ENCODE measurements at regions of chr3 and their contacts with region 1.

Region 1: DNA sequence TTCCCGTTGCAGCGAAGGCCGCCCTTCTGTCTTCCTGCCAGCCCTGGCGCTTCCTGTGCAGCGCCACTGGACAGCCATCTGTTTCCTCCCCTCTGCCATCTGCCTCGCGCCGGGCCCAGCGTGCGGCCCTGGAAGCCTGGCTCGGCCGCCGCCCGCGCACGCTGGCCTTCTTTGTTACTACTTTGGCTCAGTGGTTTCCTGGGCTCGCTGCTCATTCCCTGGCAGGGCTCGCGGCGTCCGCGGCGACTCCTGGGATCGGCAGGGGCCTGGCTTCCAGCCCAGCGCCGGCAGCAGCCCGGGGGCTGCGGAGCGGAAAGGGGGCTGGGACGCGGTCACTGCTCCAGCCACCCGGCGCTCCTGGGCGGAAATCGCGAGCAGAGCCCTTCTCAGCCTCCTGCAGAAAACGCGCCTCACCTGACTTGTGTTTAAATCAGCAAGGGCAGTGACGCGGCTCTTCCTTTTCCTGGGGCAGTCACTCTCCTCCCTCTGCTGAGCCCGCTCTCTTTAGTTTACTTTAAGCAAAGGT is 10.0 kb downstream of the CMTM7 start:
- DNase-seq: peak; percentile 80
- ATAC-seq: peak; percentile 70
- H3K4me3 ChIP-seq: peak overlapping the region; percentile 33 to 75 (median 55)
- H3K4me3 Mint-ChIP-seq: peak overlapping the region; percentile 88
- H3K27ac ChIP-seq: peak overlapping the region; percentile 88 to 94
- H3K27ac Mint-ChIP-seq: peak overlapping the region; percentile 96
- H3K4me1 ChIP-seq: peaks cover 41 to 58% of the 10 kb centered on the region in 2 donors
- H3K4me1 Mint-ChIP-seq: peaks cover 76% of the 10 kb centered on the region
- H3K27me3 ChIP-seq: no peaks in the 10 kb centered on the region
- H3K27me3 Mint-ChIP-seq: no peaks in the 10 kb centered on the region
- CTCF ChIP-seq: no peak

Region 2: GRCh38 chr3:31936420-31937060 is 465.1 kb before region 1 on chr3:
- CTCF ChIA-PET with region 1: no interaction called
- POLR2A ChIA-PET with region 1: no interaction called
- intact Hi-C with region 1: no loop called
- DNase-seq: no peak
- ATAC-seq: peak; percentile 44
- H3K4me3 ChIP-seq: no peak overlapping the region
- H3K4me3 Mint-ChIP-seq: no peak overlapping the region
- H3K27ac ChIP-seq: peak overlapping the region in 1 of 2 donors; percentile 14
- H3K27ac Mint-ChIP-seq: no peak overlapping the region
- H3K4me1 ChIP-seq: peaks cover 74 to 85% of the 10 kb centered on the region in 2 donors
- H3K4me1 Mint-ChIP-seq: peaks cover 41% of the 10 kb centered on the region
- H3K27me3 ChIP-seq: no peaks in the 10 kb centered on the region
- H3K27me3 Mint-ChIP-seq: no peaks in the 10 kb centered on the region
- CTCF ChIP-seq: no peak

Region 3: DNA sequence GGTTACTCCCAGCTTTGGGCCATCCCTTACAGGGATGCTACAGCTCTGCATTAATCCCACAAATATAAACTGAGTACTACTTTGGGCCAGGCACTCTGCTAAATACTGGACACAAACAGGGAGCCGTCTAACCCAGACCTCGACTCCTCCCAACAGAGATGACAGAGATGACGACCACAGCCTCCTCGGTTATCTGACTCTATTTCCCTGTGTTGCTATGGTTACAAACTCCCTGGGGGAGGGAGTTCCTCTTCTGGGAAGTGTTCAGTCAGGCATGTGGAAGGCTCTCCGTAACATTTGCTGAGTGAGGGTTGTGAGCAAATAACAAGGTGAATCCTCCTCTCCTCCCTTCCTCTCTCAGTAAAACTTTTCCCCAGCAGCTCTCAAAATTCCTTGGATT is 16.7 kb before region 1 on chr3:
- CTCF ChIA-PET with region 1: interaction called, 12 read pairs
- POLR2A ChIA-PET with region 1: interaction called, 4 read pairs
- intact Hi-C with region 1: no loop called
- DNase-seq: peak; percentile 76
- ATAC-seq: peak; percentile 21
- H3K4me3 ChIP-seq: no peak overlapping the region
- H3K4me3 Mint-ChIP-seq: no peak overlapping the region
- H3K27ac ChIP-seq: no peak overlapping the region
- H3K27ac Mint-ChIP-seq: no peak overlapping the region
- H3K4me1 ChIP-seq: peaks cover 13 to 21% of the 10 kb centered on the region in 2 donors
- H3K4me1 Mint-ChIP-seq: peaks cover 21% of the 10 kb centered on the region
- H3K27me3 ChIP-seq: no peaks in the 10 kb centered on the region
- H3K27me3 Mint-ChIP-seq: peaks cover 5% of the 10 kb centered on the region
- CTCF ChIP-seq: no peak

Region 4: GRCh38 chr3:32420126-32421038 is 18.8 kb after region 1 on chr3:
- CTCF ChIA-PET with region 1: interaction called, 11 read pairs
- POLR2A ChIA-PET with region 1: interaction called, 3 read pairs
- intact Hi-C with region 1: loop called (anchors 2 kb)
- DNase-seq: peak; percentile 80
- ATAC-seq: peak; percentile 77
- H3K4me3 ChIP-seq: peak overlapping the region in 3 of 5 experiments; percentile 2 to 38 (median 11)
- H3K4me3 Mint-ChIP-seq: peak overlapping the region; percentile 84
- H3K27ac ChIP-seq: peak overlapping the region; percentile 79 to 86
- H3K27ac Mint-ChIP-seq: peak overlapping the region; percentile 97
- H3K4me1 ChIP-seq: peaks cover 67 to 73% of the 10 kb centered on the region in 2 donors
- H3K4me1 Mint-ChIP-seq: peaks cover 84% of the 10 kb centered on the region
- H3K27me3 ChIP-seq: no peaks in the 10 kb centered on the region
- H3K27me3 Mint-ChIP-seq: no peaks in the 10 kb centered on the region
- CTCF ChIP-seq: no peak

Region 5: GRCh38 chr3:32570421-32571191 is 169.0 kb after region 1 on chr3 and contains the start of gene DYNC1LI1:
- CTCF ChIA-PET with region 1: no interaction called
- POLR2A ChIA-PET with region 1: no interaction called
- intact Hi-C with region 1: loop called (anchors 5 kb)
- DNase-seq: peak; percentile 95
- ATAC-seq: peak; percentile 96
- H3K4me3 ChIP-seq: peak within 1 kb of the TSS; percentile 55 to 96 (median 92)
- H3K4me3 Mint-ChIP-seq: peak within 1 kb of the TSS; percentile 94
- H3K27ac ChIP-seq: peak within 1 kb of the TSS; percentile 84 to 93
- H3K27ac Mint-ChIP-seq: peak within 1 kb of the TSS; percentile 94
- H3K4me1 ChIP-seq: peaks cover 22 to 24% of the 10 kb centered on the region in 2 donors
- H3K4me1 Mint-ChIP-seq: peaks cover 29% of the 10 kb centered on the region
- H3K27me3 ChIP-seq: no peaks in the 10 kb centered on the region
- H3K27me3 Mint-ChIP-seq: no peaks in the 10 kb centered on the region
- CTCF ChIP-seq: no peak
- total RNA-seq, gene DYNC1LI1: 38.8 and 47.8 TPM in 2 replicates

Region 6: DNA sequence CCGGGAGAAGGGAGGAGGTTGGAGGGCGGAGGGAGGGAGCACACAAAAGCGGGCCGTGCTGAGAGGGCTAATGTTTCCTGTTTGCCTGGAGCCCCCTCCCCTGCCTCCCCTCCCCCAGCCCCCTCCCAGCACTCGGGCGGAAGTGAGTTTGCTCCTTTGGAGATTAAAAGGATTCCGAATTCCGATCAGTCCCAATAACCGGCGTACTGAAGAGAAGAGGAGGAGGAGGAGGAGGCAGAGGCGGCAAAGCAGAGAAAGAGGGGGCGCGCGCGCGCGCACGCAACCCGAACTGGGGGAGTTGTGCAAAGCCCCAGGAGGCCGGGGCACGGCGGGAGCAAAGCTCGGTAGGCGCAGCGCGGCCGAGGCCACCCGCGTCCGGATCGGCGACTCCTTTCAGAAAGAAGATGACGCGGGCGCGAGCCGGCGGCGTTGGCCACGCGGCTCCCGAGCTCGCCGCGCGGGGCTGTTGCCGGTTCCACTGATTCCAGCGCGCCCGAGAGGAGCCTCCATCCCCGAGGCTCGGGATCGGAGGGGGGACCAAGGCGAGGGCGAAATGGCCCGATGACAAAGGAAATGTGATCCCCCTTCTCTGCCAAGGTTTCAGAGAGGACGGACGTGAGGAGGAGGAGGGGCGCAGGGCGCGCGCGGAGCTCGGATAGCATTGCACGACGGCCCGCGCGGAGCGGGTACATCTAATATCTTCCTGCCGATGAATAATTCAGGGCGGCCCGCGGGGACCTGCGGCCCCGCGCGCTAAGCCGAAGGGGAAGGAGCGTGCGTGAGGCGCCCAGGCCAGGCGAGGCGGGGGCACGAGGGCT is 415.0 kb after region 1 on chr3:
- CTCF ChIA-PET with region 1: no interaction called
- POLR2A ChIA-PET with region 1: no interaction called
- intact Hi-C with region 1: no loop called
- DNase-seq: peak; percentile 48
- ATAC-seq: no peak
- H3K4me3 ChIP-seq: peak overlapping the region in 4 of 5 experiments; percentile 25 to 46 (median 44)
- H3K4me3 Mint-ChIP-seq: peak overlapping the region; percentile 77
- H3K27ac ChIP-seq: no peak overlapping the region
- H3K27ac Mint-ChIP-seq: no peak overlapping the region
- H3K4me1 ChIP-seq: peaks cover 14 to 23% of the 10 kb centered on the region in 2 donors
- H3K4me1 Mint-ChIP-seq: peaks cover 30% of the 10 kb centered on the region
- H3K27me3 ChIP-seq: peaks cover 0 to 30% (median 15%) of the 10 kb centered on the region in 4 experiments
- H3K27me3 Mint-ChIP-seq: peaks cover 43% of the 10 kb centered on the region
- CTCF ChIP-seq: no peak

Measured in B cell (primary cell).